Activated T-helper 2 cell treated with anti-CD3 and anti-CD28 coated beads, Interferon-gamma antibody, Interleukin-2, Interleukin-4, amounts not matched to agents 10 μg/mL and 5 μg/mL and 100 μg/mL, durations not matched to agents 14 hours and 24 hours and 36 hours (primary cell): ENCODE measurements at regions of chr14 and their contacts with region 1.

Region 1: DNA sequence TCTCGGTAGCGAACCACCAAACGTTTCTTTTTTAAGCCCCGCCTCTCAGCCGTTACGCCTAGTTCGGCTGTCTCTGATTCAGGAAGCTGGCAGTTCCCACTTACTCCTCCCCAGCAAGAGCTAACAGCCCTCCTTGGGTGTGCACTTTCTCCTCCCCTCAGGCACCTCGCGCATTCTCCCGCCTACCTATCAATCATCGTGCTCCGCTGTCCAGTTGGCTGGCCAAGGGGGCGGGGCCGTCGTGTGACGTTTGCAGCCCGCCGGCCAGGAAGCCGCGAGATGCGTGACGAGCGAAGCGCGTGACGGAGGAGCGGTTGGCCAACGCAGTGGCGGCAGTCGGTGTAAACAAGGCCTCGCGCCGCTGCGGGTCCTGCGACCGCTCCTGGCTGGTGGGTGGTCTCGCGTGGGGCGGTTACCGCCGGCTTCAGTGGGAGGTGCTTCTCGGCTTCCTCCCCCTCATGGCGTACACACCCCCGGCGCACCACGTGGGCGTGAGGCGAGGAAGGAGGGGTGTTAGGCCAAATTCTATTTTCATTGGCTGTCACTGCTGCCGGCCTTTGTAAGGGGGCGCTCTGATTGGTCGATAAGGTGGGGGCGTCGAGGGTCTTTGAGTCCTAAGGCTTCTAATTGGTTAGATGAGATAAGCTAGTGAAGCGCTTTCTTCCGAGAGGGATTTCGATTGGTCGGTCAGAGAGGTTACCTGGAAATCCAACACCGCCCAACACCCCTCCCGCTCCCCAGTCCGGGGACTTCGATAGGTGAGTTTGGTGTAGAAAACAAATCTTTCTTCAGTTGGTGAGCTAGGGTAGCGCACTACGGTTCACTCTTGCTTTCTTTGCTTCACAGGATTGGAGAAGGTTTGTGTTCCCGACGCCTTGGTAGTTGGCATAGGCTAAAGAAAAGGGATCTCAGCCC is at the starts of genes DCAF11 and NRL:
- DNase-seq: peak; percentile 99
- H3K4me3 Mint-ChIP-seq: peak within 1 kb of the TSS; percentile 98
- H3K27ac Mint-ChIP-seq: peak within 1 kb of the TSS; percentile 99
- H3K4me1 Mint-ChIP-seq: peaks cover 30% of the 10 kb centered on the region
- H3K27me3 Mint-ChIP-seq: no peaks in the 10 kb centered on the region
- total RNA-seq, gene DCAF11: 67.2 and 77.3 TPM in 2 replicates
- total RNA-seq, gene NRL: 1.6 and 1.8 TPM in 2 replicates

Region 2: DNA sequence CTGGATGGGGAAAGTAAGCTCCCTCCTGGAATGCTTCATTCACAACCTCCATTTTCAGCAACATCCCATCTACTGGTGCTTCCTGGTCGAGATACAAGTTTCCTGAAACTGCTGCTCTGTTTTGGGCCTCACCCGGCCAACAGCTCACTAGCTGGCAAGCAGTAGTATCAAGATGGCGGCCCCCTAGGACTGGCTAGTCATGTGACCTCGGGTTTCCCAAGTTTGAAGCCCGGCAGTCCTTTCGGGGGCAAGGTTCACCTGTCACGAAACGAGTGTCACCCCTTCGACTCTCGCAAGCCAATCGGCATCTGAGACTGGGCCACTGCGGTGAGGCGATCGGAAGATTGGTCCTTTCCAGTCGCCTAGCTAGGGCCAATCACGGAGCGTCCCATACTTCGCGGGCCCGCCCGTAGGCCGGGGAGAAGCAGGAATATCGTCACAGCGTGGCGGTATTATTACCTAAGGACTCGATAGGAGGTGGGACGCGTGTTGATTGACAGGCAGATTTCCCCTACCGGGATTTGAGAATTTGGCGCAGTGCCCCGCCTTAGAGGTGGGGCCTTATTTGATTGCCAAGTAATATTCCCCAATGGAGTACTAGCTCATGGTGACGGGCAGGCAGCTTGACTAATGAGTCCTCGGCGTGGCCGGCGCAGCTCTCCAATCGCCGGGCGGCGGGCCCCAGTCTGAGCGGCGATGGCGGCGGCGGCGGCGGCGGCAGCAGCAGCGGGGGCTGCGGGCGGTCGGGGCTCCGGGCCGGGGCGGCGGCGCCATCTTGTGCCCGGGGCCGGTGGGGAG is 793.8 kb before region 1 on chr14 and contains the start of gene PABPN1:
- intact Hi-C with region 1: loop called (anchors 10 kb)
- DNase-seq: peak; percentile 98
- H3K4me3 Mint-ChIP-seq: peak within 1 kb of the TSS; percentile 88
- H3K27ac Mint-ChIP-seq: peak within 1 kb of the TSS; percentile 86
- H3K4me1 Mint-ChIP-seq: peaks cover 23% of the 10 kb centered on the region
- H3K27me3 Mint-ChIP-seq: no peaks in the 10 kb centered on the region
- total RNA-seq, gene PABPN1: 241 and 259 TPM in 2 replicates

Region 3: DNA sequence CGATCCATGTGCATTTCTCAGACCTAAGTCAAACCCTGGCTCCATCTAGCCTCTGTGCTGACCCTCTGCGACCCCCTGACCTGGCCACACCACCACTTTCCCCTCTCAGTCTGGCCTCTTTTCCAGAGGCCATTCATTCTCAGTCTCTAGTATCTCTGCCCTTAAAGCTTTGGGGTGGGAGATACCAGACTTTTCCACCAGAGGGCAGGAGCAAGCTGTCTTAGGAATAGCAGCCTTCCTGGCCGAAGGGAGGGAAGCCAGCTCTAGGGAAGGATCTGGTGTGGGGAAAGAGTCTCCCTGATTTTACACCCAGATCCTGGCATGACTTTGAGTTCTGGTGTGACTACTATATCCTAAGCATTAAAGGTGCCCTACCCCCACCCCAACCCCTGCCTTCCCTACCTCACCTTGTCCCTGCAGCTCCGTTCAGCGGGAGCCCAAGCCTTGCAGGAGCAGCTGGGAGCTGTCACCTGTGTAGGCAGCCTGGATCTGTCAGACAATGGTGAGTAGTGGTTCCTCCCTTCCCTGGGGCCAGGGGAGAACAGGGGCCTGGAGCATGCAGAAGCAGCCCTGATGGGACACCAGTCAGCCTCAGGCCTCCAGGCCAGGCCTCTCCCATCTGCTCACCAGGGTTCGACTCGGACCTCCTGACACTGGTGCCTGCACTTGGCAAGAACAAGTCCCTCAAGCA is 56.4 kb before region 1 on chr14:
- intact Hi-C with region 1: loop called (anchors 1 kb)
- DNase-seq: peak; percentile 38
- H3K4me3 Mint-ChIP-seq: no peak overlapping the region
- H3K27ac Mint-ChIP-seq: no peak overlapping the region
- H3K4me1 Mint-ChIP-seq: peaks cover 3% of the 10 kb centered on the region
- H3K27me3 Mint-ChIP-seq: peaks cover 3% of the 10 kb centered on the region

Region 4: GRCh38 chr14:24135834-24136542 is 21.2 kb after region 1 on chr14 and contains the start of gene PSME1:
- intact Hi-C with region 1: loop called (anchors 1 kb)
- DNase-seq: peak; percentile 93
- H3K4me3 Mint-ChIP-seq: peak within 1 kb of the TSS; percentile 92
- H3K27ac Mint-ChIP-seq: peak within 1 kb of the TSS; percentile 91
- H3K4me1 Mint-ChIP-seq: peaks cover 47% of the 10 kb centered on the region
- H3K27me3 Mint-ChIP-seq: no peaks in the 10 kb centered on the region
- total RNA-seq, gene PSME1: 340 and 342 TPM in 2 replicates

Region 5: GRCh38 chr14:24146978-24147760 is 32.4 kb after region 1 on chr14 and contains the start of gene RNF31:
- intact Hi-C with region 1: loop called (anchors 1 kb)
- DNase-seq: peak; percentile 97
- H3K4me3 Mint-ChIP-seq: peak within 1 kb of the TSS; percentile 100
- H3K27ac Mint-ChIP-seq: peak within 1 kb of the TSS; percentile 100
- H3K4me1 Mint-ChIP-seq: peaks cover 43% of the 10 kb centered on the region
- H3K27me3 Mint-ChIP-seq: no peaks in the 10 kb centered on the region
- total RNA-seq, gene RNF31: 80.4 and 92.0 TPM in 2 replicates

Region 6: GRCh38 chr14:24188251-24189058 is 73.7 kb after region 1 on chr14 and contains the start of gene IPO4:
- intact Hi-C with region 1: loop called (anchors 2 kb)
- DNase-seq: peak; percentile 93
- H3K4me3 Mint-ChIP-seq: peak within 1 kb of the TSS; percentile 88
- H3K27ac Mint-ChIP-seq: peak within 1 kb of the TSS; percentile 81
- H3K4me1 Mint-ChIP-seq: peaks cover 23% of the 10 kb centered on the region
- H3K27me3 Mint-ChIP-seq: no peaks in the 10 kb centered on the region
- total RNA-seq, gene IPO4: 77.0 and 80.4 TPM in 2 replicates

Region 7: GRCh38 chr14:24232121-24232644 is 117.4 kb after region 1 on chr14 and contains the start of gene NEDD8:
- intact Hi-C with region 1: loop called (anchors 1 kb)
- DNase-seq: peak; percentile 89
- H3K4me3 Mint-ChIP-seq: peak within 1 kb of the TSS; percentile 97
- H3K27ac Mint-ChIP-seq: peak within 1 kb of the TSS; percentile 91
- H3K4me1 Mint-ChIP-seq: peaks cover 44% of the 10 kb centered on the region
- H3K27me3 Mint-ChIP-seq: no peaks in the 10 kb centered on the region
- total RNA-seq, gene NEDD8: 194 and 202 TPM in 2 replicates

Region 8: DNA sequence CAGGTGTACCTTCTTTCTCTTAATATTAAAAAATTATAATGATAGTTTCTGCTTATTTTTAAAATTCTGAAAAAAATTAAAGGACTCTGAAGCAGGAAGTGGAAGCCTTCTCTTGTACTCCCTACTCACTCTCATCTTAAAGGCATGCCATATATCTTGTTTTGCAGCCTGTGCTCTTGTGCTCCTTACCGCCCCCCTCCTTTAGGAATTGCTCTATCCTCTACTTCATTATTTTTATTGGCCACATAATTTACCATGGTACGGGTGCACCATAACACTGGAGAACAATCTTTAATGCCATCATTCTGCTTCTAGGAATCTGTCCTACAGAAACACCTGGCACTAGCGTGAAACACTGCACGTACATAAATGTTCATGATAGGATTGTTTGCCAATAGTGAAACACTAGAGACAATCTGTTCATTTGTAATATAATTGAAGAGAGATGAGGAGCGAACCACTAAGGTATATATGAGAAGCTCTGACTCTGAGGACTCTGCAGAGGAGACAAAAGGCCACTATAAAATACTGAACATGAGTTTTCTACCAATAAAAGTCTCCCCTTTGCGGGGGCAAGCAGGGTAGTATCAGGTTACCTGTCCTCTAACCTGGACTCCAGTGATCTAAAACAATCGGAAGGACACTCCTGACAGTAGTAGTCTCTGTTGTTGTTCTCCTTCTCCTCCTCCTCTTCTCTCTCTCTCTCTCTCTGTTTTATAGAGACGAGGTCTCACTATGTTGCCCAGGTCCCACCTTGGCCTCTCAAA is 277.7 kb after region 1 on chr14:
- intact Hi-C with region 1: no loop called
- DNase-seq: no peak
- H3K4me3 Mint-ChIP-seq: no peak overlapping the region
- H3K27ac Mint-ChIP-seq: no peak overlapping the region
- H3K4me1 Mint-ChIP-seq: no peaks in the 10 kb centered on the region
- H3K27me3 Mint-ChIP-seq: peaks cover 39% of the 10 kb centered on the region